Lower lobe of right lung (tissue), 2 donors: ENCODE measurements at regions of chr11 and their contacts with region 1.

Region 1: GRCh38 chr11:86041975-86042378 is 26.9 kb downstream of the PICALM start:
- DNase-seq: no peak
- ATAC-seq: peak; percentile 92 to 95
- H3K4me3 ChIP-seq: peak overlapping the region; percentile 25
- H3K27ac ChIP-seq: peak overlapping the region; percentile 12
- H3K4me1 ChIP-seq: peaks cover 67% of the 10 kb centered on the region
- H3K27me3 ChIP-seq: no peaks in the 10 kb centered on the region
- CTCF ChIP-seq: peak; percentile 91

Region 2: GRCh38 chr11:86193297-86194095 is 151.5 kb after region 1 on chr11:
- intact Hi-C with region 1: loop called (anchors 10 kb)
- DNase-seq: peak; percentile 63
- ATAC-seq: peak; percentile 97 to 99
- H3K4me3 ChIP-seq: peak overlapping the region; percentile 37
- H3K27ac ChIP-seq: peak overlapping the region; percentile 62
- H3K4me1 ChIP-seq: peaks cover 21% of the 10 kb centered on the region
- H3K27me3 ChIP-seq: no peaks in the 10 kb centered on the region
- CTCF ChIP-seq: peak; percentile 78